Motor neuron (in vitro differentiated cells): ENCODE measurements at regions of chr22 and their contacts with region 1.

Region 1: DNA sequence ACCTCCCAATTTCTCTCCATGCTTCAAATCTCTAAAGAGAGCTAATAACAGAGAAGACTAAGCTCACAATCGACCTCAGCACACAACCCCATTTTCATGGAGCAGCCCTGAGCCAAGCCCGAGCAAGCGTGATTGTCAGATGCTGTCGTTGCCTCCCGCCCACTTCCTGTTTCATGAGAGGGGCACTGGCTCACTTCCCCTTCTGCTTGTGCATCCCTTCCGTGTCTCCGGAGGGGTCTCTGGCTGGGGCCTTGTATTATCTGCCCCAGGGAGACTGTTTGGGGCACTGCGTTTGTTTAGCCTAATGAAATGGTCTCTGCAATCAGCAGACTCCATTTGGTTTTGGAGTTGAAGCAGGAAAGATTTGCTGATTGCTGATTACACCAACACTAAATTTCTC is 181.3 kb upstream of the SEZ6L start:
- ATAC-seq: peak in 1 of 8 experiments; percentile 53
- H3K4me3 ChIP-seq: no peak overlapping the region
- H3K27ac ChIP-seq: no peak overlapping the region
- H3K4me1 ChIP-seq: peaks cover 0 to 4% of the 10 kb centered on the region in 2 donors

Region 2: DNA sequence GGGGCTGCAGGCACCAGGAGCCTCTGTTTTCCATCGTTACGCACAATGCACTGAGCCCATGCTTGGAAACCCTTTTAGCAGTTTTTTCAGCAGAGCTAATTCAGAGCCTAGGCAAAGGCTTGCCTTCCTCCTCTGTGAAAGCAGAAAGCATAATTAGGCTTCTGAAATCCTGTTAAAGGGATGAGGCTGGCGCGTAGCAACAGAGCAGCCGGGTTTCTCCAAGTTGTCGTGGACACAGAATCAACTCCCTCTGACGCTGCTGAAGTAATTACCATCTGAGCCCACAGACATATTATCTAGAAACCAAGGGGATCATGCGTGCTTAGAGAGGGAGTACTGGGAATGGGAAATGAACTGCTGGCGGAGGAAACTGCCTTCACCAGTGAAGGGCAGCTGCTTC is 160.5 kb before region 1 on chr22:
- in situ Hi-C with region 1: no loop called
- ATAC-seq: peak in 5 of 8 experiments; percentile 80 to 91 (median 83)
- H3K4me3 ChIP-seq: no peak overlapping the region
- H3K27ac ChIP-seq: peak overlapping the region in 1 of 2 donors; percentile 21
- H3K4me1 ChIP-seq: peaks cover 20 to 24% of the 10 kb centered on the region in 2 donors

Region 3: GRCh38 chr22:26086359-26086758 is 98.4 kb after region 1 on chr22:
- in situ Hi-C with region 1: loop called in 1 of 9 experiments (anchors 25 kb)
- ATAC-seq: no peak
- H3K4me3 ChIP-seq: no peak overlapping the region
- H3K27ac ChIP-seq: no peak overlapping the region
- H3K4me1 ChIP-seq: peaks cover 6 to 9% of the 10 kb centered on the region in 2 donors